OCI-LY7 (cell line): ENCODE measurements at regions of chr12 and their contacts with region 1.

Region 1: GRCh38 chr12:131290255-131290959 is 336.7 kb downstream of the ADGRD1 start:
- DNase-seq: no peak
- H3K4me3 ChIP-seq: no peak overlapping the region
- H3K27ac ChIP-seq: no peak overlapping the region
- H3K4me1 ChIP-seq: peaks cover 1% of the 10 kb centered on the region
- CTCF ChIP-seq: no peak

Region 2: GRCh38 chr12:131673888-131674257 is 383.5 kb after region 1 on chr12:
- CTCF ChIA-PET with region 1: no interaction called
- POLR2A ChIA-PET with region 1: no interaction called
- intact Hi-C with region 1: loop called (anchors 5 kb)
- DNase-seq: no peak
- H3K4me3 ChIP-seq: no peak overlapping the region
- H3K27ac ChIP-seq: no peak overlapping the region
- H3K4me1 ChIP-seq: no peaks in the 10 kb centered on the region
- CTCF ChIP-seq: no peak